ENCODE measurements at regions of chr12 and their contacts with region 1.

Region 1: GRCh38 chr12:1583421-1584078 is 10.8 kb downstream of the FBXL14 start:
- DNase-seq: peak; percentile 88
- H3K4me3 ChIP-seq: peak overlapping the region; percentile 28
- H3K27ac ChIP-seq: no peak overlapping the region
- H3K4me1 ChIP-seq: peaks cover 16% of the 10 kb centered on the region
- H3K27me3 ChIP-seq: no peaks in the 10 kb centered on the region
- CTCF ChIP-seq: peak; percentile 92

Region 2: DNA sequence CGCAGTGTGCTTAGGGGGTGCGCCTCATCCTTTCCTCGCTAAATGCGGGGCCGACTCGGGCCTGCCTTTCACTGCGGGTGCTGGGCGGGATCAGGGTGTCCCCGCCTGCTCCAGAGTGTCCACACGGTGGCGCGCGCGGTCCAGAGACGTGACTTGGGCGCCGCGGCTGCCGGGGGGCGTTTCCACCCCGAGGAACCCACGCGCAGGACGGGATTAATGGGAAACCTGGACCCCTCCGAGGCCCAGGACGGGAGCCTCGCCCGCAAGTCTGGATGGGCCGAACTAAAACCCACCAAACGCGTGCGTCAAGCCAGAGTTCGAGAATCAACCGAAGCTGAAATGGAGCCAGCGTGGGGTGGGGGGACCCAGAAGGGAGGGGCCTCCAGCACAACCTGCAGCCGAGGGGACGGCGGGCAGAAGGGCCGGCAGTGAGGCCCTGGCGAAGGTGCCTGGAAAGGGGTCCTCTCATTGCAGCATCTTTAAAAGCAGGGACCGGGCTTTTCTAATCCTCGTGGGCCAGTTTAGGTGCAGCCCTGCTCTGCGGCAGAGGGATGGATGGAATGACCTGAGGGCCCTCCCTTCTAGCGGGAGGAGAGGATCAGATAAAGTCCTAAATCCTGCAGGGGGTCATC is 1013.6 kb before region 1 on chr12:
- CTCF ChIA-PET with region 1: no interaction called
- POLR2A ChIA-PET with region 1: no interaction called
- intact Hi-C with region 1: loop called (anchors 2 kb)
- DNase-seq: peak; percentile 90
- H3K4me3 ChIP-seq: peak overlapping the region; percentile 55
- H3K27ac ChIP-seq: no peak overlapping the region
- H3K4me1 ChIP-seq: no peaks in the 10 kb centered on the region
- H3K27me3 ChIP-seq: no peaks in the 10 kb centered on the region
- CTCF ChIP-seq: peak; percentile 99

Region 3: DNA sequence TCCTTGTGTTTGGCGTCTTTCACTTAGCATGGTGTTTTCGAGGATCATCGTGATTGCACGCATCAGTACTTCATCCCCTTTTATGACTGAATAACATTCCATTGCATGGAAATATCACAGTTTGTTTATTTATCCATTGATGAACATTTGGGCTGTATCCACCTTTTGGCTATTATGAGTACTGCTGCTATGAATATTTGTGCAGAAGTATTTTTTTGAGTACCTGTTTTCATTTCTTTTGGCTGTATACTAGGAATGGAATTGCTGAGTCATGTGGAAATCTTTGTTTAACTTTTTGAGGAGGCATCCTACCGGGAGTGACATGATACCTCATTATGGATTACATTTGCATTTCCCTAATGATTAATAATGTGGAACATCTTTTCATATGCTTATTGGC is 764.8 kb before region 1 on chr12:
- CTCF ChIA-PET with region 1: no interaction called
- POLR2A ChIA-PET with region 1: no interaction called
- intact Hi-C with region 1: loop called (anchors 5 kb)
- DNase-seq: no peak
- H3K4me3 ChIP-seq: no peak overlapping the region
- H3K27ac ChIP-seq: peak overlapping the region; percentile 15
- H3K4me1 ChIP-seq: peaks cover 18% of the 10 kb centered on the region
- H3K27me3 ChIP-seq: no peaks in the 10 kb centered on the region
- CTCF ChIP-seq: 0 out of 2 replicates have a peak, but pooled peaks have one; percentile 8

Region 4: GRCh38 chr12:949453-950191 is 633.9 kb before region 1 on chr12 and contains the start of gene RAD52:
- CTCF ChIA-PET with region 1: interaction called, 5 read pairs
- POLR2A ChIA-PET with region 1: no interaction called
- intact Hi-C with region 1: loop called (anchors 5 kb)
- DNase-seq: peak; percentile 99
- H3K4me3 ChIP-seq: peak within 1 kb of the TSS; percentile 72
- H3K27ac ChIP-seq: peak within 1 kb of the TSS; percentile 84
- H3K4me1 ChIP-seq: peaks cover 21% of the 10 kb centered on the region
- H3K27me3 ChIP-seq: no peaks in the 10 kb centered on the region
- CTCF ChIP-seq: peak; percentile 99
- total RNA-seq, gene RAD52: 23.0 and 24.7 TPM in 2 replicates

Region 5: DNA sequence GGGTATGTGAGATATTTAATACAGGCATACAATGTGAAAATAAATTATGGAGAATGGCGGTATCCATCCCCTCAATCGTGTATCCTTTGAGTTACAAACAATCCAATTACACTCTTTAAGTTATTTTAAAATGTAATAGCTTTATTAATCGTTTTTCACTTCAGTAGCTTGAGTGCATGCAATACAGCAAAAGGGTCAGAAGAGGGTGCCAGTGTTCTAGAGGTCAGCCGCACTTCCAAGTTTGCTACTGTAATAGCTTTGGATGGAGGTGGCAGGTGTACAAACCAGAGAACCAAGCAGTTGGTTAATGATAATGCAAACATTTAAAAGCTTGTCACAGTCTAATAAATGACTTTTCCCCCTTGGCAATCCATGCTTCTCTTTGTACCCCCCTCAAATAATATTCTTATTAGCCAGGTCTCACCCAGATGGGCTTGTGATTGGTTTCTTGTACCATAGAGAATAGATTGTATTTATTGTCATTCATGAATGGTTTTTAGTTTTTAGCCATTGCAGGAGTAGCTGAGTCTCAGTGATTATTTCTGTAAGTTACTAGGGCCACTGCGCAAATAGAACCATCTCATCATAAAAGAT is 465.5 kb before region 1 on chr12:
- CTCF ChIA-PET with region 1: interaction called, 35 read pairs
- POLR2A ChIA-PET with region 1: interaction called, 3 read pairs
- intact Hi-C with region 1: loop called (anchors 1 kb)
- DNase-seq: peak; percentile 74
- H3K4me3 ChIP-seq: no peak overlapping the region
- H3K27ac ChIP-seq: no peak overlapping the region
- H3K4me1 ChIP-seq: peaks cover 7% of the 10 kb centered on the region
- H3K27me3 ChIP-seq: no peaks in the 10 kb centered on the region
- CTCF ChIP-seq: peak; percentile 93

Region 6: DNA sequence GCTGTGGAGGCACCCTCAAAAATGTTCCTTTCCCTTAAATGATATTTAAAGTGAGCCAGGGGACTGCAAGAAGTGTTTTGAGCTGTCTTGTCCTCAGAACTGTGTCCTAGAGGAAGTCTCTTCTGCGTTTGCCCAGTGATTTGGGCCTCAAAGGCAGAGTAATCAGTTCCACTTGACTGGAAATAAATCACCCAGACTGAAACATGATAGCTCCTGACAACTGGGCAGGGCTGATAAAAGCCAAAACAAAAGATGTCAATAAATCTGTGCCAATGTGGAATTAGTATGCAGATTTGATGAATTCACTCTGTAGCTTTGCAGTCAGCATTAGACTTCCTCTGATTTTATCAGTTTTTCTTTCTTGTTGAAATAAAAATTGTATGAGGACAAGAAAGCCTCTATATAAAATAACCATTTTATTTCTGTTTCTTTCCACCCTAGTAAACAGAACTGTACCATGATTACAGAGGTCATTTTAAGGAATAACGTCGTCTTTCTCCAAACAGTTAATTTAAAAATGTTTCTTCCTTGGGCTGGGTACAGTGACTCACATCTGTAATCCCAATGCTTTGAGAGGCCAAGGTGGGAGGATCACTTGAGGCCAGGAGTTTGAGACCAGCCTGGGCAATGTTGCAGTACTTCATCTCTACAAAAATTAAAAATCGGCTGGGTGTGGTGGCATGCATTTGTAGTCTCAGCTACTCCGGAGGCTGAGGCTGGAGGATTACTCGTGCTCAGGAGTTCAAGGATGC is 411.7 kb before region 1 on chr12:
- CTCF ChIA-PET with region 1: no interaction called
- POLR2A ChIA-PET with region 1: interaction called, 11 read pairs
- intact Hi-C with region 1: no loop called
- DNase-seq: peak; percentile 85
- H3K4me3 ChIP-seq: no peak overlapping the region
- H3K27ac ChIP-seq: peak overlapping the region; percentile 56
- H3K4me1 ChIP-seq: peaks cover 21% of the 10 kb centered on the region
- H3K27me3 ChIP-seq: no peaks in the 10 kb centered on the region
- CTCF ChIP-seq: no peak

Region 7: GRCh38 chr12:1373901-1374695 is 209.5 kb before region 1 on chr12:
- CTCF ChIA-PET with region 1: no interaction called
- POLR2A ChIA-PET with region 1: no interaction called
- intact Hi-C with region 1: no loop called
- DNase-seq: peak; percentile 90
- H3K4me3 ChIP-seq: no peak overlapping the region
- H3K27ac ChIP-seq: peak overlapping the region; percentile 62
- H3K4me1 ChIP-seq: peaks cover 32% of the 10 kb centered on the region
- H3K27me3 ChIP-seq: no peaks in the 10 kb centered on the region
- CTCF ChIP-seq: no peak

Region 8: GRCh38 chr12:2324387-2324786 is 740.8 kb after region 1 on chr12:
- CTCF ChIA-PET with region 1: no interaction called
- POLR2A ChIA-PET with region 1: no interaction called
- intact Hi-C with region 1: no loop called
- DNase-seq: peak; percentile 38
- H3K4me3 ChIP-seq: no peak overlapping the region
- H3K27ac ChIP-seq: no peak overlapping the region
- H3K4me1 ChIP-seq: peaks cover 18% of the 10 kb centered on the region
- H3K27me3 ChIP-seq: no peaks in the 10 kb centered on the region
- CTCF ChIP-seq: no peak

Measured in A673 (cell line).